ENCODE measurements at regions of chr7 and their contacts with region 1.

Region 1: GRCh38 chr7:30348083-30348560 is 63.7 kb downstream of the ZNRF2 start:
- DNase-seq: peak; percentile 48
- CTCF ChIP-seq: no peak

Region 2: DNA sequence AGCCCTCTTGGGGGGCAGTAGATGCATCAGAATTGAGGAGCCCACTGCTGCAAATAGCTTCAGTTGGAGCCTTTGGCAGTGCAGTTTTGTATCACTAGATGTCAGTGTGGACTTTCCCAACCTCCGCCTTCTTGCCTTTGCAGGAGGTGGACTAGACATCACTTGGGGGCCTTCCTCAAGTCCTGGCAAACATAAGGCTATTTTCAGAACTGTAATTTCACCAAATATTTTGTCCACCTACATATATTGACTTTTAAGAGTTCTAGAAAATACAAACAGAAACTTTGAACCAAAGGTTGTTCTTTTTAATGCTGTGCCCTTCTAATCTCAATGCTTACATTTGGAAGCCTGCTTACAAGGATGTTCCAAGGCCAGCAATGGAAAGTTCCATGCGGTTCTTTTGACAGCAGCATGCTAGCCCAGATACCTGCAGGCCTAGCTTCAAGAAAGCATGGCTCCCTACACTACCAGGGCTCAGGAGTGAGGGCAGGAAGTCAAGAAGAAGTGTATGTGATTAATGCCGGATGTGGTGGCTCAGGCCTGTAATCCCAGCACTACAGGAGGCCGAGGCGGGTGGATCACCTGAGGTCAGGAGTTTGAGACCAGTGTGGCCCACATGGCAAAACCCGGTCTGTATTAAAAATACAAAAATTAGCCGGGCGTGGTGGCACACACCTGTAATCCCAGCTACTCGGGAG is 71.8 kb before region 1 on chr7:
- CTCF ChIA-PET with region 1: interaction called, 52 read pairs
- POLR2A ChIA-PET with region 1: no interaction called
- DNase-seq: peak; percentile 55
- CTCF ChIP-seq: peak; percentile 66

Region 3: GRCh38 chr7:30312178-30312577 is 35.9 kb before region 1 on chr7:
- CTCF ChIA-PET with region 1: no interaction called
- POLR2A ChIA-PET with region 1: no interaction called
- DNase-seq: no peak
- CTCF ChIP-seq: no peak

Region 4: DNA sequence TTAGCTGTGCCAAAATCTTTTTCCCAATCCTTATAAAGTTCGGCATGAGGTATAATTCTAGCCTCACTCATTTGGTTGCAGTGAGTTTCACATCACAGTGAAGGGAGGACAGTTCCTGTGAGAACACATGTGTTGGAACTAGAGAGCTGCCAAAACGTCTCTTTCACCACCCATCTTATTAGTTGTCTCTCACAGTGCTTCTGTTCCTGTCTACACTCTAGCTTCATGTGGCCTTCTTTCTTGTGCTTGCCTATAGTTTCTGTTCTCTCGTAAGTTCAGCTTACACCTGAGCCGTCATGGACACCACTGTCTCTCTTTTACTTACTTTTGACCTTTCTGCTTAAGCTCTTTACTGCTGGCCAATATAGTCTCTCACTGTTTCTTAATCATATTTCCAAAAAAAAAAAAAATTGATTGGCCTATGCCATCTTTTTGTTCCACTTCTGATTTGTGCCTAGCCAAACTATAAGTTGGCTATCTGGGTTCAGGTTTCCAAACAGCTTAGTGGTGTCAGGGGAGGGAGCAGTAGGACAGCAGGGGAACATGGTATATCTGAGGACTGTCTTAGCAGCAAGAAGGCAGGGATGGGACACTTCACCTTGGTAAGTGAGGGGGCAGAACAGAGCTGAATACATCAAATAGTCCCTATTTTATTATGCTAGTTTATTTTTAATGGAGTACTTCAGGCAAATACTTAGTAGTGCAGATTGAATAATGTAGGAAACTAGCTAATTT is 25.7 kb before region 1 on chr7:
- CTCF ChIA-PET with region 1: interaction called, 12 read pairs
- POLR2A ChIA-PET with region 1: no interaction called
- DNase-seq: peak; percentile 34
- CTCF ChIP-seq: no peak

Region 5: DNA sequence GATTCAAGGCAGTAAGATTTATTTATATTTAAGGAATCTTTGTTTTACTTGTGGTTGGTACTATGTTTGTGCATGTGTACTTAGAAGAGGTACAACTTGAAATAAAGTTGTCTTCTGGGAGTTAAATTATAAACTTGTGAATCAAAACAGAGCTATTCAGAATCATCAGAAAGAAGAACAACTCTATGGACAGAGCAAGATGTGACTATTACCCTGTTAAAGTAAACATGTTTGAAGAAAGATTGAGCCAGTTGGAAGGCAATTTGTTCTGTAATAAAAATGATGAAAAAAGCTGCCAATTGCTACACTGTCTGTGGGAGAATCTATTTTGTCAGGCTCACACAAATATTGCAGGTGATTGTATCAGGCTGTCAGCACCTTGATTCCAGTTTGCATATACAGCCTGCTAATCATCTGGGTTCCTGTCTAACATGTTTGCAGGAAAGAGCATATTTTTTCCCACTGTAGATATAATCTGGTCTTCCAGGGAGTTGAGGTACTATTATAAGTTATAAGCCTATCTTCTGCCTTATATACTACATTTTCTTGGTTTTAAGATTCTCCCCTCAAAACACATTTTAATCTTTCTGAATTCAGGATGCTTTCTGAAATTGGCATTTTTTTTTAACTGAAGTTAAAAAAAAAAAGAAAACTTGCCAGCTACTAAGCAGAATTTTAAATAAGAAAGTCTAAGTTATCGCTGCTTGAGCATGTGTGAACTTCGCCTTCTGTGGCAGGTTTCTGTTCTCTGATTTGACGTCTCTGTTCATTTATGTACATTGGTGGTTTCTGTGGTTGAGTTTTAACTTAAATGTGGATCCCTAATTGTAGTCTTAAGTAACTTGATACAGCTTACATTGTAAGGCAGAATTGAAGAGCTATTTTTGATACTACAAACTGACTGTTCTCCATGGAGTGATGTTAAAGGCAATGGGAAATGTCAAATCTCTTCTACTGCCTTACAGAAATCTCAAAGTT is 17.7 kb before region 1 on chr7:
- CTCF ChIA-PET with region 1: interaction called, 13 read pairs
- POLR2A ChIA-PET with region 1: no interaction called
- DNase-seq: peak; percentile 26
- CTCF ChIP-seq: no peak

Region 6: GRCh38 chr7:30335763-30336487 is 12.2 kb before region 1 on chr7:
- CTCF ChIA-PET with region 1: interaction called, 13 read pairs
- POLR2A ChIA-PET with region 1: no interaction called
- DNase-seq: no peak
- CTCF ChIP-seq: no peak

Region 7: DNA sequence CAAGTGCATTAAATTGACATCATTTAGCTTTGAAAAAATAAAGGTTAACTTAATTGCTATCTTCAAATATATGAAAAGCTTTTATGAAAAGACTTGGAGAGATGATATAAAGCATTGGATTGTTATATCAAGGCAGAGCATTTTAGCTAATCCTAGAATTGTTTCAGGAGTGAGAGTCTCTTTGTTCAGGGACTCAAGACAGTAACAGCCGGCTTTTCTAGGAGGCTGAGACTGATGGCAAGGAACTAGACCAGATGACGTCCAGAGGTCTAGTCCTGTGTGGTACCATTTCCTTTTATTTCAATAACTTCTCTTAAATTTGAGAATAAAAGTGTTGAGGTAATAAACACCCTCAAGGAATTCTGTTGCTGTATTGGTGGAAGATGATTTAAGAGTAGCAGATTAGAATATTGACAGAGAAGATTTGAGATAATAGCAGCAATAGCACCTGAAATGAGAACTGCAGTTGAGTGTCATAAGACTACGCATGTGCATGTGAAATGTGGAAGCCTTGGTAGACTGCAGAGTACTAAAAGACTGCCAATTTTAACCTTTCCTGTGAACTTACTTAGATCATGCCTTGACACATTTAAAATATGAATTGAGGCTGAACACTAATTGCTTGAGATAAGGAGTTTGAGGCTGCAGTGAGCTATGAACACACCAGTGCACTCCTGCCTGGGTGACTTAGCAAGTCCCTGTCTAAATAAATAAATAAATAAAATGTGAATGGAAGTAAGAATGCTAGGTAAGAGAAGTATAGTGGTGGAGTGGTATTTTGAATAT is 15.8 kb after region 1 on chr7:
- CTCF ChIA-PET with region 1: interaction called, 12 read pairs
- POLR2A ChIA-PET with region 1: no interaction called
- DNase-seq: no peak
- CTCF ChIP-seq: no peak